Pancreas (tissue), 10 donors: ENCODE measurements at regions of chr13 and their contacts with region 1.

Region 1: GRCh38 chr13:29707876-29708543 is 112.5 kb upstream of the SLC7A1 start:
- DNase-seq: peak; percentile 41 to 86 (median 48)
- ATAC-seq: peak; percentile 78 to 95 (median 91)
- H3K4me3 ChIP-seq: no peak overlapping the region
- H3K27ac ChIP-seq: no peak overlapping the region
- H3K4me1 ChIP-seq: no peaks in the 10 kb centered on the region
- H3K27me3 ChIP-seq: no peaks in the 10 kb centered on the region
- CTCF ChIP-seq: peak; percentile 39 to 54 (median 46)

Region 2: DNA sequence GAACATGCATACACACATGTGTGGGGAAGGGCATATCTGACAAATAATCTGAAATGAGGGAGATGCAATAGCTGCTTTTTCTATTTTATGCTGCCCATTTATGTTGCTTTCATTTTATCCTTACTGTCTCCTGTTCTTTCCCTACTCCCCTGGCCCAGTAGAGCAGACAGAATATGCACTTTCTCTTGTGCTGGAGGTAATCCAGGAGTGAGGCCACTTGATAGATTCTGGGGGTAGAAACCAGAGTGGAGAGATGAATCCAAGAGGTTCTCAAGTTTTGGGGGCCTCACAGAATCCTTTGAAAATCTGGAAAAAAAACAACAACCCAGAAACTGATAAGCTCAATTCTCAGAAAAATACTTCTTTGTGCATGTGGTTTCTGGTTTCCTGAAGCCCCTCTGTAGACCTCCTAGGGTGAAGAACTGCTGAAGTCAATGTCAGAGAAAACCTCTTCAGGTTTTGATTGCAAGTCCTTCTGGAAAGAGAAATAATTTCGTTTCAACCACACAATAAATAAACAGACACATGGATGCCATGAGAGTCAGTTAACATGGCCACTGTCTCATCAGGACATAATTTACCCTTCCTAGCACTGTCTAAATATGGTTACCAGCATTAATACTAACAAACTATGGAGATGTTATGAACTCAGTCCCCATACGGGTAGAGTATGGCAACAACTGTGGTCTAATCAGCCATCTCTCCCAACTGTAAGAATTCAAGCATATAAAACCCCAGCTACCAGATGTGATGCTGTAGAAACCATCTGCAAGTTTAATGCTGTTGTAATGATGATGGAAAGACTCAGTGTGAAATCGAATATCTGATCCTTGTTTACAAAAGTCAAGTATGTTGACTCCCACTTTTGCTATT is 468.1 kb before region 1 on chr13:
- intact Hi-C with region 1: no loop called
- DNase-seq: no peak
- ATAC-seq: no peak
- H3K4me3 ChIP-seq: no peak overlapping the region
- H3K27ac ChIP-seq: no peak overlapping the region
- H3K4me1 ChIP-seq: no peaks in the 10 kb centered on the region
- H3K27me3 ChIP-seq: no peaks in the 10 kb centered on the region
- CTCF ChIP-seq: no peak

Region 3: DNA sequence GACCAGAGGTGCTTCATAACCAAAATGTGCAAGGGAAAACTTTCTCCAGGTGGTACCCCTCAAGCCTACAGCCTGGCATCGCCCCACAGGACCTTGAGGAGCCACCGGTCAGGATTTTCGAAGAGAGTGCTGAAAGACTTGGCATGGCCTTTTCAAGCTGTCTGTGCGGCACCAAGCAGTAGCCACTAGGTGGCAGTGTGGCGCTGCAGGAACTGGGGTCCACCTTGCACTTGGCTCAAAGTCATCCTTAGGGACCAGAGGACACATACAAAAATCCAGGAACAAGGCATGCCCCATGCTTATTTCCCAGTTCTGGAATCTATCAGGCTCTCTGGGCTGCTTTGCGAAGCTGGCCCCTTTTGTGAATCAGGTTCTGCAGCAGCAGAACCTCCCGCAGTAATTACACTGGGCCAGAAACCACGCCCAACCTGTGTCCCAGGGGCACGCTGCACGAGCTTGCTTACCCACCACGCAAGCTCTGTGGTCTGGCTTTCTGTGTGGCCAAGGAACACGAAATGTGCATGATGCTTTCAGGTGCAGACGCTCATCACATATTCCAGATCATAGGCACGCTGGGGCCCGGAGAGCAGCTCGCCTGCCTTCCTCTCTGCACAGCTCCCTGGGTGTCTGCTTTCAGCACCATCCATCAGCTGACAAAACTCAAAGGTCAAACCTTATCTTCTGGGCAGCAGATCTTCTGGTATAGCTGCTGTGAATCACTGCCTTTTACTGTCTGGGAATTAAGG is 199.7 kb before region 1 on chr13:
- intact Hi-C with region 1: loop called in 2 of 3 experiments (anchors 2 to 5 kb)
- DNase-seq: peak; percentile 66 to 94 (median 88)
- ATAC-seq: peak; percentile 84 to 96 (median 91)
- H3K4me3 ChIP-seq: no peak overlapping the region
- H3K27ac ChIP-seq: no peak overlapping the region
- H3K4me1 ChIP-seq: no peaks in the 10 kb centered on the region
- H3K27me3 ChIP-seq: no peaks in the 10 kb centered on the region
- CTCF ChIP-seq: peak; percentile 97 to 99 (median 98)

Region 4: GRCh38 chr13:29513397-29514322 is 194.3 kb before region 1 on chr13:
- intact Hi-C with region 1: loop called in 2 of 3 experiments (anchors 2 to 5 kb)
- DNase-seq: no peak
- ATAC-seq: no peak
- H3K4me3 ChIP-seq: no peak overlapping the region
- H3K27ac ChIP-seq: no peak overlapping the region
- H3K4me1 ChIP-seq: no peaks in the 10 kb centered on the region
- H3K27me3 ChIP-seq: no peaks in the 10 kb centered on the region
- CTCF ChIP-seq: no peak